ENCODE measurements at regions of chr4 and their contacts with region 1.

Region 1: DNA sequence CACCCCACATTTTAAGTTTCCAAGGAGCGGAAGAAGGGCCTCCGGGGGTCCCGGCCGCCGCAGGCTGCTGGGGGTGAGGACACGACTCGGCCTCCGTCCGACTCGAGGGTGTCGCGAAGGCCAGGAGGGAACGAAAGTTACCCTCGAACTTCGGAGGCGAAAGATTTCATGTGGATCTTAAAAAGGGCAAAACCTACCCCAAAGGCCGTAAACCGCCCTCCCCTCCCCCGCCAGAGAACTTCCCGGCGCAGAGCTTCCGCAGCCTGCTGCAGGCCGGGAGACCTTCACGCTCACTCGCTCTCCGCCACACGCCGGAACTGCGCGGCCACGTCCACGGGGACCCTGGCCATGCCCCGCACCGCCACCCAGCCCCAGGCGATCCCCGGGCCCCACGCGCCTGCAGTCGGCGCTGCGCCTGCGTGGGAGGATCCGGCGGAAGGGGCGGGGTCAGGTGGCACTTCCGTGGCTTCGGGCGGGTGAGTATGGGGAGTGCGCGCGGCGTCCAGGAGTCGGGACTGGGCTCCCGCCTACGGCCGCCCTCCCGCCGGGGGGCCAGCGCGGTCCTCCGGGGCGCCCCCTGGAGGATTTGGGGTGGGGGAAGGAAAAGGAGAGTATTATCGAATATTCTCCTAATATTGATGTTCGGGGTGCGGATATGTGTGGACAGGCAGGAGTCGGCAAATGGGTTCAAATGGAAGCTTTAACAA is at the start of gene MMAA:
- DNase-seq: peak; percentile 83 to 97
- H3K4me3 ChIP-seq: peak within 1 kb of the TSS; percentile 78
- H3K4me1 ChIP-seq: peaks cover 19% of the 10 kb centered on the region
- H3K27me3 ChIP-seq: no peaks in the 10 kb centered on the region

Region 2: DNA sequence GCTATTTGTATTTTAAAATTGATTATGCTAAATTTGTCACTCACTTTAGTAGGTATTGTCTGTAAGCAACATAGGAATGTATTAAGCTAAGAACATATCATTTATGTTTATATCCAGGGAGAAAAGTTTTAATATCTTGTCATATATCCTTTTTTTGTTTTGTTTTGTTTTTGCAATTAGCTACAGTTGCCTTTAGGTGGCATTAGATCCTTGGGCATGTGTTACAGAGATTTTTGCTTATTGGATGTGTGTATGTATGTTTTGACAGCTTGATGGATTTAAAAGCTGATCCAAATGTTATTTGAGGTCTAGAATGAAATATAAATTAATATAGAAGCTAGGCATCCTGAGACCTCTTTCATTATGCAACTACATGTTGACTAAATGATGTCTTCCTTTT is 402.6 kb before region 1 on chr4:
- in situ Hi-C with region 1: loop called (anchors 25 kb)
- DNase-seq: no peak
- H3K4me3 ChIP-seq: no peak overlapping the region
- H3K4me1 ChIP-seq: no peaks in the 10 kb centered on the region
- H3K27me3 ChIP-seq: 0 out of 2 replicates have a peak, but pooled peaks cover 3% of the 10 kb centered on the region

Region 3: DNA sequence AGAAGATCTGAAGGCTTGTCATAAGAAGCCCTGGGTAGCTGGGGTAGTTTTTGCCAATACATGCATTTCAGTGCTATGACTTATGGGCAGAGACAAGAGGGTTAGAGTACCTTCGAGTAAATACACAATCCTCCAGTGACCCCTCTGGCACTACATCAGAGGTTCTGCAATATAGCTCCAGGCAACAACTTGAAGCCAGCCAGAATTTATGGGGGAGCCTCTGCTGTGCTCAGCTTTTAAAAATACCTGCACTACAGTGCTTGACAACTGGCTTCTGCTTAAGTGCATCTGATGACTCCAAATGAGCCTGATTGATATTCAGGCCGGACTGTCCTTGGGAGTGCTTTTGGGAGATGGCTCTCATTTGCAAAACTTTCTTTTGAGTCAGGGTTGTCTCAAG is 182.3 kb before region 1 on chr4:
- in situ Hi-C with region 1: no loop called
- DNase-seq: no peak
- H3K4me3 ChIP-seq: no peak overlapping the region
- H3K4me1 ChIP-seq: no peaks in the 10 kb centered on the region
- H3K27me3 ChIP-seq: no peaks in the 10 kb centered on the region; the same call in 1 of the 2 replicates

Region 4: DNA sequence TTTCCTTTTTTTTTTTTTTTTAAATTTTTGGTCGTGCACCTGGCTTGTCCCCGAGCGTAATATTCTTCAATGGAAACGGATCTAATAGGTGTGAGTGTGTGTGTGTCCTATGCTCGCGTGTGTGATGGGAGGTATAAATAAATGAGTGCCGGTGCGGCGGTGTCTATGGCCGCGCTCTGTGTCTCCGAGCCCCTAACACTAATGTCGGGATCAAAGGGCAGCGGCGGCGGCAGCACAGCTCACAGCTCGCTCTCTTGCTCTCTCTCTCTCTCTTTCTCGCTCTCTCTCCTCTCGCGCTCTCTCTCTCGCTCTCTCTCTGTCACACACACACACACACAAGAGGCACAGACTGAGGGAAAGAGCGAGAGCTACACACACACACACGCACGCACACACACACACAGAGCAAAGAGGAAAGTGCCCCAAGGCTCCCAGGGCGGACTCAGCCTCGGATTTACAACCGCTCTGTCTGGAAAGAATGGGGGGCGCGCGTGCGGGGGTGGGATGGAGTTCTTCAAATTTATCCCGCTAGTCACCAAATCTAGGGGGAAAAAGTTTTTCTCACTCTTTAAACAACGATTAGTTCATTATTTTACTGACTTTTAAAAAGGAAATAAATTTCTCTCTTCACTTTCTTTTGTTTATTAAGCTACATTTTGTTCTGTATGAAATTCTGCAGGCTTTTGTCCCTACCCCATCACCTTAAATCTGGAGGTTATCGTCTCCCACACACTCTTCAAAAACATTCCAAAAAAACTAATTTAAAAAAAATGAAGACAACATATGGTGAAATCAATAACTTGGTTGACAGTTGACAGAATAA is 319.7 kb after region 1 on chr4 and contains the start of gene ZNF827:
- in situ Hi-C with region 1: no loop called
- DNase-seq: peak; percentile 66 to 81
- H3K4me3 ChIP-seq: peak within 1 kb of the TSS; percentile 58
- H3K4me1 ChIP-seq: peaks cover 22% of the 10 kb centered on the region
- H3K27me3 ChIP-seq: no peaks in the 10 kb centered on the region

Region 5: DNA sequence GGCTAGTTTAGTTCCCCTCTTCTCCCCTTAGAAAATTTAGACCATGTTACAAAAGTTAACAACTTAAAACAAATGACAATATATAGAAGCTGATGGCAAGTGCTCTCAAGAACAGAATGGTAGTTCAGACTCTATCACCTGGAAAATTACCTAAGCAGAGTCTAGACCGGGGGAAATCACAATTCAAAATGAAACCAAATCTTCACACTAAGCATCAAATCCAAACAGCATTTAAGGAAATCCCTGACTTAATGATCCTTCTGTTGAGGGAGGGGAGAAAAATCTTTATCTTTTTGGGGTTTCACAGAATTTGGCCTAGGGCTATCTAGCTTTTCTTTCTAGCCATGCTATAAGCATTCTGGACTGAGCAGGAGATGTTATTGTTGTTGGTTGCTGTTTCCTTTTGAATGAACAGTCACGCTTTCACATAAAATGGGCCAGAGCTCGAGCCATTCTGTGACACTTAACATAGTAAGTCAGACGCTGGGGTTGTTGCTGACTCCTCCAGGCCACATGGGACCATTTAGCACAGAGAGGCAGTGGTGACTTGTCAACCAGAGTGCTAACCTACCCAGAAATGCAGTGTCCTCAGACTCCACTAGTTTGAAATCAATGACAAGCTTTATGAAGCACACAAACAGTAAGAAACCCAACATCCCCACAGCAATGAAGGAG is 540.4 kb after region 1 on chr4:
- in situ Hi-C with region 1: no loop called
- DNase-seq: no peak
- H3K4me3 ChIP-seq: no peak overlapping the region
- H3K4me1 ChIP-seq: peaks cover 2% of the 10 kb centered on the region
- H3K27me3 ChIP-seq: peaks cover 11% of the 10 kb centered on the region

Region 6: DNA sequence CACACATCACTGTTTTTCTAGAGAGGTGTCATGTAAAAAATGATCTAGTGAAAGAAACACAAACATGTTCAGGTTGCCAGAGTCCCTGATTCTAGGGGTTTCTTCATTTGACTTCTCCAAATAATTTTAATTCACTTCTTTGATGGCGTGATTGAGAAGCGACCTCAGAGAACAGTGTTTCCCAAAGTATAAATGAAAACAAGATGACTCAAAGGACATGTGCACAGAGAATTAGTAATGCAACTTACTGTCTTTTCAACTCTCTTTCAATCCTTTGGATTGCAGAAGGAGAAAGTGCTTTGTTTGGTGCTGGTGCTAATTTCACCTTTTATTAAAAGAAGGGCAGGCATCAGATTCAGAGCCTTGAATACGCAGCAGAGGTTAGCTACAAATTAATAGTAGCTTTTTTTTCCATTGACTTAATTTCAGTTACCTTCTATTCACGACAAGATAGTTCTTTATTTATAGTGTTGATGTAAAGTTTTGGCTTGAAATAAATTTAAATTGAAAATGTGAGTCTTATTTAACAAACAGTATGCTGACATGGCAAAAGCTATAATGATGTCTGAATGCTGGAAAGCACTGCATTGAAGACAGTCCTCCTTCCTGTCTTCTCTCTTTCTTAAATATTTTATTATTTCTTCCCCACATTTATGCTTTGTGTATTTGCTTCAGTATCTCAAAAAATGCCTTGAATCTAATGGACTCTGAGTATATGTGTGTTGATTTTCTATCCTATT is 817.5 kb after region 1 on chr4:
- in situ Hi-C with region 1: no loop called
- DNase-seq: no peak
- H3K4me3 ChIP-seq: no peak overlapping the region
- H3K4me1 ChIP-seq: peaks cover 28% of the 10 kb centered on the region
- H3K27me3 ChIP-seq: peaks cover 4% of the 10 kb centered on the region; the same call in 1 of the 2 replicates